Activated naive CD8-positive, alpha-beta T cell treated with anti-CD3 and anti-CD28 coated beads, Interleukin-2, amount 10 ng/mL, durations not matched to agents 7 days and 5 days (primary cell): ENCODE measurements at regions of chr9 and their contacts with region 1.

Region 1: DNA sequence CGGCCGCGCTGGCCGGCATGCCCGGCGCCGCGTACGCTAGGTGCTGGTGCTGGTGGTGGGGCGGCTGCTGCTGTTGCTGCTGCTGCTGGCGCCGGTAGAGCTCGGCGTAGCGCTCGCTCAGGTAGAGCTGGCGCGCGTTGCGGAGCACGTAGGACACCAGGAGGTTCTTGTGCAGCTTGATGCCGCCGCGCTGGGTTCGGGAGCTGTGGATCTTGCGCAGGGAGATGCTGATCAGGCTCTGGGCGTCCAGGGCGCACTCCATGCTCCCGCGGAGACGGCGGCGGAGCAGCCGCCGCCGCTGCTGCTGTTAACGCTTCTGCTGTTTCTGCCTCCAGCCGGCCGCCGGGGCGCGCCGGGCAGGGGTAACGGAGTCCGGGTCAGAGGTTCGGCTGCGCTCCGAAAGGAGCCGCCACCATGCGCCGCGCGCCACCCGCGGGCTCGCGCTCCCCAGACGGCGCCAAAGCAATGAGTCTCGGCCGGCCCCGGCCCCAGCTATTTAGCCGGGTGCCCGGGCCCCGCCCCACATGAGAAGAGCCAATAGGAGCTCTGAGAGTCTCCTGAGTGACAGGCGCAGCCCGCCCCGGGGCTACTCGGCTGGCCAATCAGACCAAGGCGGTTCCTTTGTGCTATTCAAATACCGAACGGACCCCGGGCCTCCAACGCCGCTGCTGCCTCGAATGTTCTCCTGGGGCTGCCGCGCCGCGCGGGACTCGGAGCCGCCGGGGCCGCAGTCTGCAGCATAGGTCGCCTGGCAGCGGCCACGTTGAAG is at the start of gene IER5L:
- DNase-seq: peak; percentile 95
- ATAC-seq: peak; percentile 83
- H3K4me3 Mint-ChIP-seq: peak within 1 kb of the TSS; percentile 89
- H3K27ac Mint-ChIP-seq: peak within 1 kb of the TSS; percentile 76
- H3K4me1 Mint-ChIP-seq: peaks cover 8% of the 10 kb centered on the region
- H3K27me3 Mint-ChIP-seq: peaks cover 6% of the 10 kb centered on the region
- total RNA-seq, gene IER5L: 8.6 to 8.8 TPM

Region 2: DNA sequence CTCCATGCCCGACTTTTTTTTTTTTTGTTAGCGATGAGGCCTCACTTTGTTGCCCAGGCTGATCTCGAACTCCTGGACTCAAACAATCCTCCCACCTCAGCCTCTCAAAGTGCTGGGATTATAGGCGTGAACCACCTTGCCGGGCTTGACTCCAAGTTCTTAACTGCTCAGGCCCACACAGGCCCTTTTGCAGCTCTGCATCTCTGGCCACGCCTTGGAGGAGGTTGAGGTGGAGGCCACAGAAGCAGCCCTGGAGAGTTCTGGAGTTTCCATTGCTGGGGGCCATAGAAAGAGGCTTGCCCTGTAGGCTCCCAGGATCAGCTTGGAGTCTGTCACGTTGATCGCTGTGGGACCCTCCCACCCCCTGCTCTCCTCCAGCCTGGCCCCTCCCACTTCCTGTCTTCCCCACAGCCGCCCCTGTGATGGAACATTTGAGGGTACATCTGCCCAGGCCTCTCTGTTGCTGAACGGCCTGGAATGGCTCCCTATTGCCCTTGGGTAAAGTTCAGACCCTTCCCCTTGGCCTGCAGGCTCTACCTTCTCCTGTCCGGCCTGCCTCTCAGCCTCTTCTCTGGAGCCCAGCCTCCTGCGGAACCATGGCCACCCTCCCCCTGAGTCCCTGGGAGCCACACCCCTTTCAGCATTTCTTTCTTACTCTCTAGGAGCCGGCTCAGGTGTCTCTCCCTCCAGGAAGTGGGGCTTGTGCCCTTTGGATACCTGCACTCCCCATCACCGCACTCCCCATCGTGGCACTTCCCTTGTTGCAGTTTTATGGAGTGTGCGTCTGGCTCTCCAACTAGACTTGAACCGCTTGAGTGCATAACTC is 30.4 kb after region 1 on chr9:
- POLR2A ChIA-PET with region 1: interaction called, 15 read pairs
- DNase-seq: peak; percentile 70
- ATAC-seq: peak; percentile 88
- H3K4me3 Mint-ChIP-seq: peak overlapping the region; percentile 80
- H3K27ac Mint-ChIP-seq: peak overlapping the region; percentile 95
- H3K4me1 Mint-ChIP-seq: peaks cover 25% of the 10 kb centered on the region
- H3K27me3 Mint-ChIP-seq: no peaks in the 10 kb centered on the region

Region 3: GRCh38 chr9:129237195-129237611 is 59.2 kb after region 1 on chr9:
- POLR2A ChIA-PET with region 1: interaction called, 39 read pairs
- DNase-seq: no peak
- ATAC-seq: peak; percentile 56
- H3K4me3 Mint-ChIP-seq: peak overlapping the region; percentile 86
- H3K27ac Mint-ChIP-seq: peak overlapping the region; percentile 89
- H3K4me1 Mint-ChIP-seq: peaks cover 54% of the 10 kb centered on the region
- H3K27me3 Mint-ChIP-seq: no peaks in the 10 kb centered on the region

Region 4: DNA sequence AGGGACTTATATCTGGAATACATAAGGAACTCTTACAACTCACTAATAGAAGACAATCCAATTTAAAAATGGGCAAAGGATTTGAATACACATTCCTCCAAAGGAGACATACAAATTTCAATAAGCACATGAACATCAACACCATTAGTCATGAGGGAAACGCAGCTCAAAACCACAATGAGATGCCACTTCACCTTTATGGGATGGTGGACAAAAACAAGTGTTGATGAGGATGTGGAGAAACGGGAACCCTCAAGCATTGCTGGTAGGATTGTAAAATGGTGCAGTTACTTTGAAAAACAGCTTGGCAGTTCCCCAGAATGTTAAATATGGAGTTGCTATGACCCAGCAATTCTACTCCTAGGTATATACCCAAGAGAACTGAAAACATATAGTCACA is 72.8 kb after region 1 on chr9:
- POLR2A ChIA-PET with region 1: no interaction called
- DNase-seq: no peak
- ATAC-seq: no peak
- H3K4me3 Mint-ChIP-seq: no peak overlapping the region
- H3K27ac Mint-ChIP-seq: no peak overlapping the region
- H3K4me1 Mint-ChIP-seq: peaks cover 4% of the 10 kb centered on the region
- H3K27me3 Mint-ChIP-seq: peaks cover 25% of the 10 kb centered on the region

Region 5: DNA sequence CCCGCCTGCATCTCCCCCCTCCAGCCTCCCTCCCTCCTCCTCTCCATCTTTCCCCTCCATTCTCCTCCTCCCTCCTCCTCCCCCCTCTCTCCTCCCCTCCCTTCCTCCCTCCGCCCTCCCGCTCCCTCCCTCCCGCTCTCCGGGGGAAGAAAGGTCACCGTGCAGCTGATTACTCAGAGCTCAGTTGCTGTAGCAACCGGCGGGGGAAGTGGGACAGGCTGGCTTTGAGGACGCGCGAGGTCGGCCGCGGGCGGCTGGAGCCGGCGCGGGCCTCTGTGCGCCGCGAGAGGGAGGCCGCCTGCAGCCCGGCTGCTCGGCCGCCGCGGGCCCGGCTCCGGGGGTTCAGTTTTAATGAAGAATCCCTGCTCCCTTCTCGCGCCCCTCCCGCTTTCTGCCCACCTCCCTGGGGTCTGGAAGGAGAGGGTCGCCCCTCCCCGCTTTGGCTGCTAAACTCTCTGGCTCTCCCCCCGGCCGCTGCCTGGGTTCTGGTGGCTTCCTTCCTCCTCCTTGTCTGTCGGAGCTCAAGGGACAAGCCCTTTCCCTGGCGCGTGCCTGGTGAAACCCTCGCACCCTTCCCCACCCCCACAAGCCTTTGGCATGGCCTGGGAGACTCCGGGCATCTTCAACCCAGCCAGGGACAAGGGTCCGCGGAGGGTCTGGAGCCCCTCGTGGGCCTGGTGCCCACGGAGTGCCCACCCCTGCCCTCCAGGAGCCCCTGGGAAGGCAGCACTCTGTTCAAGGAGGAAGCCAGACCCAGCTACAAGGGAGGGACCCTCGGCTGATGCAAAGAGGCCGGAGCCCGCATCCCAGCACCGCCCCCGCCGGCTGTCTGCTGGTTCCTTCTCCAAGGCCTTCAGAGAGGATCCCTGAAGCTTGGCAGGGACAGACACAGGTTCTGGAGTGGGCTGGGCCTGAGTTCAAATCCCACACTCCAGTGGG is 282.6 kb after region 1 on chr9:
- POLR2A ChIA-PET with region 1: interaction called, 20 read pairs
- DNase-seq: peak; percentile 86
- ATAC-seq: peak; percentile 89
- H3K4me3 Mint-ChIP-seq: peak overlapping the region; percentile 83
- H3K27ac Mint-ChIP-seq: peak overlapping the region; percentile 94
- H3K4me1 Mint-ChIP-seq: peaks cover 19% of the 10 kb centered on the region
- H3K27me3 Mint-ChIP-seq: peaks cover 10% of the 10 kb centered on the region